PC-3 (cell line): ENCODE measurements at regions of chr18 and their contacts with region 1.

Region 1: DNA sequence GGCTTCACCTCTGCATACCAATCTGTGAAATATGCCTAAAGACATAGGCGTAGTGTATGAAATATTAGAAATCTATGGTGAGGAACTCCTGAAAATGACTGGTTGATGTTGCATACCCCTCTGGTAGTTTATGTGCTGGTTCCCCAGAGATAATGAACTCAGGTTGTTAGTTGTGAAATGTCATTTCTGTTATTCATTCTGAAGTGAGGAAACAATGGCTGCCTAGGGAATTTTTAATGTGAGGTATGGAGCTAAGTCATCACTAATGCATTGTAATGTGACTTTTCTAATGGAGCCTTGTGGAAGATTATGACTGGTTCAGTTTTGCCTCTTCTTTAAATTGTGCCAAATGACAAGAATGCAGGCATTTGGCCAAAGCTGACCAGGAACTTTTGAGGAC is 61.7 kb upstream of the RAB27B start:
- DNase-seq: peak; percentile 75
- ATAC-seq: peak; percentile 47
- H3K4me3 ChIP-seq: peak overlapping the region; percentile 54
- H3K27ac ChIP-seq: peak overlapping the region; percentile 99
- H3K4me1 ChIP-seq: peaks cover 56% of the 10 kb centered on the region
- H3K27me3 ChIP-seq: no peaks in the 10 kb centered on the region
- CTCF ChIP-seq: no peak

Region 2: GRCh38 chr18:54696592-54697293 is 69.9 kb before region 1 on chr18:
- CTCF ChIA-PET with region 1: no interaction called
- POLR2A ChIA-PET with region 1: no interaction called
- intact Hi-C with region 1: loop called (anchors 5 kb)
- DNase-seq: peak; percentile 8
- ATAC-seq: peak; percentile 77
- H3K4me3 ChIP-seq: no peak overlapping the region
- H3K27ac ChIP-seq: no peak overlapping the region
- H3K4me1 ChIP-seq: peaks cover 9% of the 10 kb centered on the region; the same call in 1 of the 2 replicates
- H3K27me3 ChIP-seq: no peaks in the 10 kb centered on the region
- CTCF ChIP-seq: no peak

Region 3: GRCh38 chr18:54983041-54983686 is 216.5 kb after region 1 on chr18:
- CTCF ChIA-PET with region 1: no interaction called
- POLR2A ChIA-PET with region 1: no interaction called
- intact Hi-C with region 1: loop called (anchors 5 kb)
- DNase-seq: peak; percentile 82
- ATAC-seq: peak; percentile 86
- H3K4me3 ChIP-seq: no peak overlapping the region
- H3K27ac ChIP-seq: no peak overlapping the region
- H3K4me1 ChIP-seq: peaks cover 9% of the 10 kb centered on the region; the same call in 1 of the 2 replicates
- H3K27me3 ChIP-seq: no peaks in the 10 kb centered on the region
- CTCF ChIP-seq: peak; percentile 81